Gastrocnemius medialis (tissue), 4 donors: ENCODE measurements at regions of chr16 and their contacts with region 1.

Region 1: GRCh38 chr16:30571695-30572600 is at the start of gene ZNF688:
- DNase-seq: peak; percentile 95 to 96
- ATAC-seq: peak; percentile 96
- H3K4me3 ChIP-seq: peak within 1 kb of the TSS; percentile 75 to 96 (median 86)
- H3K27ac ChIP-seq: peak within 1 kb of the TSS; percentile 84 to 99 (median 98)
- H3K4me1 ChIP-seq: peaks cover 21 to 24% of the 10 kb centered on the region in 2 donors
- H3K27me3 ChIP-seq: no peaks in the 10 kb centered on the region
- CTCF ChIP-seq: no peak
- POLR2A ChIP-seq: peak in 1 of 2 donors; percentile 68
- total RNA-seq, gene ZNF688: 11.0 to 38.2 (median 18.5) TPM

Region 2: GRCh38 chr16:30534368-30535105 is 37.4 kb before region 1 on chr16 and contains the start of gene ZNF747:
- in situ Hi-C with region 1: no loop called
- intact Hi-C with region 1: loop called (anchors 1 kb)
- DNase-seq: peak; percentile 93 to 95
- ATAC-seq: peak; percentile 87 to 91
- H3K4me3 ChIP-seq: peak within 1 kb of the TSS; percentile 65 to 88 (median 82)
- H3K27ac ChIP-seq: peak within 1 kb of the TSS; percentile 90 to 96 (median 94)
- H3K4me1 ChIP-seq: peaks cover 23 to 24% of the 10 kb centered on the region in 2 donors
- H3K27me3 ChIP-seq: no peaks in the 10 kb centered on the region
- CTCF ChIP-seq: peak in 1 of 5 experiments; percentile 6
- POLR2A ChIP-seq: peak; percentile 71 to 74
- total RNA-seq, gene ZNF747: 8.6 to 17.5 (median 13.1) TPM

Region 3: DNA sequence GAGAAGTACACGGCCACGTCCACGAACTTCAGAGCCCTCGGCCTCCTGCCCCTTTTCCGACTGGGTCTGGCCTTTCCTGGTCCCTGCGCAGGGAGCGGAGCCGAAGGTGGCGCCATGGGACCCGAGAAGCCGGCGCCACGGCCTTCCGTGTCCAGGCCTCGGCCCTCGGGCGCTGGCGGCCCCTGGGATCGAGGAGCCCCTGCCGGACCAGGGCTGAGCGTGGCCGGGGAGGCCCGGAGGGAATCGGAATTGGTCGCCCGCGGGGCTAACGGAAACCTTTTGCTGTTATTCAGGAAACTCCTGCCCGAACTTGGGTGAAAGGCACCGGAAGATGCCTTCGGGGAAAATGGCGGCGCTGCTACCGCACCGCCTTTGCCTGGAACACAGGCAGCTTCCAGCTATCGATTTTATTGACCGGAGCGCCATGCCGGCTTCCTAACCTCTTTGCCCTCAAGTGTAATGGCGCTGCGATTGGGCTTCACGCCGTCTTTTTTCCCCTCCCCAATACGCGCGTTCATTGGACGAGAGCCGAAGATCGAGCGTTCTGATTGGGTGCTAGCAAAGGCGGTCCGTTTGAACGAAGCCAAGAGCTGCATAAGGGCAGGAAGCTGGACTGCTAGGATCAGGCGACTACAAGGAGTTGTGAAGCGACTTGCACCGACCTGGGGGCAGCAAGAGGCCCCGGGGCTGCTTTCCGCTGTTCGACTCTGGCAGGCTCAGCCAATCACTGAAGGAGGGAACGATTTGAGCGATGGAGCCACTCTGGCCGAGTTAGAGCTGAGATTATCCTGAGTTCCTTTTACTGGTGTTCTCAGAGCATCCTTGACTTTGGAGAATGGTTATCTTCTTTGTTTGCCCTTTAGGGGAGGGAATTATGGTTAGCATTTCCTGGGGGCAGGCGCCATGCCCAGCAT is 38.2 kb after region 1 on chr16 and contains the start of gene ZNF689:
- in situ Hi-C with region 1: no loop called
- intact Hi-C with region 1: loop called (anchors 5 kb)
- DNase-seq: peak; percentile 94
- ATAC-seq: peak; percentile 100
- H3K4me3 ChIP-seq: peak within 1 kb of the TSS; percentile 80 to 100 (median 98)
- H3K27ac ChIP-seq: peak within 1 kb of the TSS; percentile 91 to 99 (median 94)
- H3K4me1 ChIP-seq: no peaks in the 10 kb centered on the region
- H3K27me3 ChIP-seq: no peaks in the 10 kb centered on the region
- CTCF ChIP-seq: no peak
- POLR2A ChIP-seq: peak in 1 of 2 donors; percentile 45
- total RNA-seq, gene ZNF689: 2.9 to 6.3 (median 6.1) TPM

Region 4: GRCh38 chr16:30637942-30638341 is 66.0 kb after region 1 on chr16:
- in situ Hi-C with region 1: loop called in 1 of 4 experiments (anchors 10 kb)
- intact Hi-C with region 1: loop called (anchors 1 kb)
- DNase-seq: no peak
- ATAC-seq: no peak
- H3K4me3 ChIP-seq: no peak overlapping the region
- H3K27ac ChIP-seq: no peak overlapping the region
- H3K4me1 ChIP-seq: peaks cover 9 to 16% of the 10 kb centered on the region in 2 donors
- H3K27me3 ChIP-seq: no peaks in the 10 kb centered on the region
- CTCF ChIP-seq: no peak
- POLR2A ChIP-seq: no peak

Region 5: DNA sequence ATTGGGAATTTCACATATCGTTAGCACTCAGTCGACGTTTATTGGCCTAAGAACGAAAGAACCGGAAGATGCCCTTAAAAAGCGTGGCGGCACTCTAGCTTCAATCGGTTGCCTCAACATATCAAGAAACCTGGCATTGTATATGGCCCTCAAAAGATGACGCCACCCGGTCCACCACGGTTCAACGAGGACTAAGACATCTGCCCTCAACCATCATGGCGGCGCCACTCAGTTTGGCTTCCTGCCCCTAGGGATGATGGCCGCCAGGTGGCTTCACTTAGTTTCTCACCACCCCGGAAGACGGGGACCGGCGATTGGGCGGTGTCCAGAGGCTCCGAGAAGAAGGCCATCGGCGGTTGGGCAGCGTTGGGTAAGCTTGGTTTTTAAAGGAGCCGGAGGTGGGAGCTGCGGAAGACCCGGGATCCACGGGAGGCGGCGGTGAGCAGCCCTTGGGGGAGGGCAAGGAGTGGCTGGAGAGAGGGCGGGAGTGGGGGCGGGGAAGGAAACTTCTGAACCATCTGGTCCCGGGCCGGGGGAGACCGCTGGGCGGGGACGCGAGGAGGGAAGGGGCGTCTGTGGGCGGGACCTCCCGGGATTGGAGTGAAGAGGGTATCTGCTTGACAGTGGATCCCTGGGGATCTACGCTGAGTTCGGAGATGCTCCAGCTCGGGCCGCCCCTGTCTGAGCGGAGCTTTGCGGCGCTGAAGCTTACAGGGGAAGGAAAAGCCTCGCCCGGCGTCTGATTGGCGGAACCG is 78.6 kb after region 1 on chr16 and contains the start of gene PRR14:
- in situ Hi-C with region 1: loop called in 1 of 4 experiments (anchors 5 kb)
- intact Hi-C with region 1: no loop called
- DNase-seq: peak; percentile 100
- ATAC-seq: peak; percentile 90 to 91
- H3K4me3 ChIP-seq: peak within 1 kb of the TSS; percentile 83 to 96 (median 93)
- H3K27ac ChIP-seq: peak within 1 kb of the TSS; percentile 94 to 99 (median 98)
- H3K4me1 ChIP-seq: peaks cover 6 to 18% of the 10 kb centered on the region in 2 donors
- H3K27me3 ChIP-seq: no peaks in the 10 kb centered on the region
- CTCF ChIP-seq: peak in 4 of 5 experiments; percentile 38 to 69 (median 48)
- POLR2A ChIP-seq: peak in 1 of 2 donors; percentile 74
- total RNA-seq, gene PRR14: 8.8 to 28.4 (median 17.8) TPM